ENCODE measurements at regions of chr1 and their contacts with region 1.

Region 1: GRCh38 chr1:201559679-201560162 is 20.8 kb downstream of the NAV1 start:
- DNase-seq: peak; percentile 27 to 70 (median 40)
- H3K4me3 ChIP-seq: no peak overlapping the region
- H3K4me3 Mint-ChIP-seq: no peak overlapping the region
- H3K27ac ChIP-seq: no peak overlapping the region
- H3K27ac Mint-ChIP-seq: peak overlapping the region in 1 of 8 donors; percentile 47
- H3K4me1 ChIP-seq: no peaks in the 10 kb centered on the region
- H3K4me1 Mint-ChIP-seq: peaks cover 2 to 10% (median 6%) of the 10 kb centered on the region in 3 donors
- H3K27me3 ChIP-seq: no peaks in the 10 kb centered on the region
- H3K27me3 Mint-ChIP-seq: peaks cover 3 to 4% of the 10 kb centered on the region in 2 donors

Region 2: GRCh38 chr1:201570886-201571624 is 11.3 kb after region 1 on chr1:
- CTCF ChIA-PET with region 1: interaction called, 17 read pairs
- POLR2A ChIA-PET with region 1: no interaction called
- DNase-seq: no peak
- H3K4me3 ChIP-seq: no peak overlapping the region
- H3K4me3 Mint-ChIP-seq: no peak overlapping the region
- H3K27ac ChIP-seq: peak overlapping the region; percentile 16
- H3K27ac Mint-ChIP-seq: no peak overlapping the region
- H3K4me1 ChIP-seq: no peaks in the 10 kb centered on the region
- H3K4me1 Mint-ChIP-seq: peaks cover 3 to 9% (median 8%) of the 10 kb centered on the region in 3 donors
- H3K27me3 ChIP-seq: no peaks in the 10 kb centered on the region
- H3K27me3 Mint-ChIP-seq: peaks cover 3 to 5% of the 10 kb centered on the region in 2 donors

Measured in CD8-positive, alpha-beta memory T cell (primary cell).